AG04450 (cell line): ENCODE measurements at regions of chr19 and their contacts with region 1.

Region 1: DNA sequence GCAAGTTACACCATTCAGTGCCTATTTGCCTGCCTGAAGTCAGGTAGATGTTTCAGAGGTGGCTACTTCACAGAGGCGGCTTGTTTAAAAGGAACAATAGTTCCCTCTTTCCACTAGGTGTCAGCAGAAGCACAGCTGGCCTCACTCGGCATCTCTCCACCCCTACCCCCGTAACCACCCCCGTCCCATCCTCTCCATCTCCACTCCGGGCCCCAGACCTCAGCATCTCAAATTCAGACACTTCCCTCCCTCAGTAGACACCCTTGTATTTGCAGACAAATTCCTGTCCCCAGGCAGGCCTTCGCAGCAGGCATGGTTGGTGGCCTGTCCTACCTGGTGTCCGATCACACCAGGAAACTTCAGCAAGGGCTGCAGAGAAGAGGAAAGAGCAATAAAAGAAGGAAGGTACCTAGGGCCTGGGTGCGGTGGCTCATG is 9.1 kb upstream of the DPP9 start:
- DNase-seq: peak; percentile 26
- H3K4me3 ChIP-seq: no peak overlapping the region
- H3K27ac ChIP-seq: no peak overlapping the region
- H3K27me3 ChIP-seq: peaks cover 9% of the 10 kb centered on the region
- CTCF ChIP-seq: peak; percentile 82

Region 2: GRCh38 chr19:4781801-4782200 is 49.1 kb after region 1 on chr19:
- CTCF ChIA-PET with region 1: interaction called, 12 read pairs
- POLR2A ChIA-PET with region 1: no interaction called
- DNase-seq: no peak
- H3K4me3 ChIP-seq: no peak overlapping the region
- H3K27ac ChIP-seq: no peak overlapping the region
- H3K27me3 ChIP-seq: peaks cover 18% of the 10 kb centered on the region
- CTCF ChIP-seq: no peak

Region 3: GRCh38 chr19:4803736-4804695 is 71.3 kb after region 1 on chr19:
- CTCF ChIA-PET with region 1: interaction called, 37 read pairs
- POLR2A ChIA-PET with region 1: no interaction called
- DNase-seq: no peak
- H3K4me3 ChIP-seq: no peak overlapping the region
- H3K27ac ChIP-seq: no peak overlapping the region
- H3K27me3 ChIP-seq: no peaks in the 10 kb centered on the region
- CTCF ChIP-seq: peak; percentile 71